ENCODE measurements at regions of chr10 and their contacts with region 1.

Region 1: DNA sequence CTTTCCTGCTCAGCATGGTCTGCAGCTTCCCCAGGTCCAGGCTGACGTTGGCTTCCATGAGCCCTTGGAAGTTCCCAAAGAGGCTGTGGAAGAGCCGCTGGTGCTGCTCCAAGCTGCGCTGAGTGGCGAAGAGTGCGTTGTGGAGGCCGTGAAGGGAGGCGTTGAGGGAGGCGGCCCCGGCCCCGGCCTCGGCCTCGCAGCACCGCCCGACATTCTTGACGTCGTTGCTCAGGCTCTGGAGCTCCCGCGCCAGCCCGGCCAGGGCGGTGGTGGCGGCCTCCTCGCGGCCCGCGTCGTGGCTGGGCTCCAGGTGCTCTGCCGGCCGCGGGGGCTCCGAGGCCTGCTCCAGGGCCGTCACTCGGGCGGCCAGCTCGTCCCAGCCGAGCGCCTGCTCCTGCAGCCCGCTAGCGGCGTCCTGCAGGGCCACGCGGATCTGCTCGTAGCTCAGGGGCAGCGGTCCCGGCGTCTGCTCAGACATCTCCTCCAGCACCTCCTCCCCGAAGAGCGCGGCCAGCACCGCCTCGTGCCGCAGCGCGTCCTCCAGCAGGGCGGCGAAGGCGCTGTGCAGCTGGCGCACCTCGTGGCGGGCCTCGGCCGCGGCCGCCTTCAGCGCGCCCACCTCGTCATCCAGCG is 14.9 kb downstream of the MMRN2 start:
- DNase-seq: peak in 1 of 5 donors; percentile 31
- H3K4me3 ChIP-seq: no peak overlapping the region
- H3K4me3 Mint-ChIP-seq: no peak overlapping the region
- H3K27ac ChIP-seq: no peak overlapping the region
- H3K27ac Mint-ChIP-seq: no peak overlapping the region
- H3K4me1 ChIP-seq: no peaks in the 10 kb centered on the region
- H3K4me1 Mint-ChIP-seq: peaks cover 1 to 4% (median 4%) of the 10 kb centered on the region in 3 donors
- H3K27me3 ChIP-seq: no peaks in the 10 kb centered on the region
- H3K27me3 Mint-ChIP-seq: peaks cover 5 to 6% of the 10 kb centered on the region in 2 donors

Region 2: DNA sequence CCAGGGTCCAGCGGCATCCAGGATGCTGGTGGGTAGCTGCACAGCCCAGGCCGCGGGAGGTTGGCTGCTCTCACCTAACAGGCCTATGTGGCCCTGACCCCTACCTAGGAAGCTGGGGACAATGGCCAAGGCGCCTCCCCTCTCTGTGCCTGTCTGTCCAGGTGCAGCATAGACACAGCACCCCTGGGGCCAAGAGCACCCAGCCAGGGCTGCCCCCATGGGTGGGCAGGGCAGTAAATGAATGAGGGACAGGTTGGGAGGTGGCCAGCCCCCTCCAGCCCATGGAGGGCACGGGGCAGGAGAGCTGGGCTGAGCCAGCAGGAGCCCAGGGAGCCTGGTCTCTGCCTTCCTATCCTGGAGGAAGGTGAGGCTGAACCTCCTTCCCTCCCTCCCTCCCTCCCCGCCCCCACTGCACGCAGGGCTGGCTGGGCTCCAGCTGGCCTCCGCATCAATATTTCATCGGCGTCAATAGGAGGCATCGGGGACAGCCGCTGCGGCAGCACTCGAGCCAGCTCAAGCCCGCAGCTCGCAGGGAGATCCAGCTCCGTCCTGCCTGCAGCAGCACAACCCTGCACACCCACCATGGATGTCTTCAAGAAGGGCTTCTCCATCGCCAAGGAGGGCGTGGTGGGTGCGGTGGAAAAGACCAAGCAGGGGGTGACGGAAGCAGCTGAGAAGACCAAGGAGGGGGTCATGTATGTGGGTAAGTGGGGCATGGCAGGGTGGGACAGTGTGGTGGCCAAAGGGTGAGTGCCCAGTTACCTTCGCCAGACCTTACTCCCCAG is 15.7 kb after region 1 on chr10 and contains the start of gene SNCG:
- CTCF ChIA-PET with region 1: interaction called, 10 read pairs
- POLR2A ChIA-PET with region 1: interaction called, 6 read pairs
- DNase-seq: peak in 1 of 5 donors; percentile 42
- H3K4me3 ChIP-seq: no peak within 1 kb of the TSS
- H3K4me3 Mint-ChIP-seq: no peak within 1 kb of the TSS
- H3K27ac ChIP-seq: peak within 1 kb of the TSS; percentile 9
- H3K27ac Mint-ChIP-seq: peak within 1 kb of the TSS in 2 of 8 donors; percentile 22 to 33
- H3K4me1 ChIP-seq: no peaks in the 10 kb centered on the region
- H3K4me1 Mint-ChIP-seq: peaks cover 0 to 2% (median 0%) of the 10 kb centered on the region in 3 donors
- H3K27me3 ChIP-seq: no peaks in the 10 kb centered on the region
- H3K27me3 Mint-ChIP-seq: no peaks in the 10 kb centered on the region
- total RNA-seq, gene SNCG: not detected